CD4-positive, alpha-beta T cell (primary cell): ENCODE measurements at regions of chr6 and their contacts with region 1.

Region 1: DNA sequence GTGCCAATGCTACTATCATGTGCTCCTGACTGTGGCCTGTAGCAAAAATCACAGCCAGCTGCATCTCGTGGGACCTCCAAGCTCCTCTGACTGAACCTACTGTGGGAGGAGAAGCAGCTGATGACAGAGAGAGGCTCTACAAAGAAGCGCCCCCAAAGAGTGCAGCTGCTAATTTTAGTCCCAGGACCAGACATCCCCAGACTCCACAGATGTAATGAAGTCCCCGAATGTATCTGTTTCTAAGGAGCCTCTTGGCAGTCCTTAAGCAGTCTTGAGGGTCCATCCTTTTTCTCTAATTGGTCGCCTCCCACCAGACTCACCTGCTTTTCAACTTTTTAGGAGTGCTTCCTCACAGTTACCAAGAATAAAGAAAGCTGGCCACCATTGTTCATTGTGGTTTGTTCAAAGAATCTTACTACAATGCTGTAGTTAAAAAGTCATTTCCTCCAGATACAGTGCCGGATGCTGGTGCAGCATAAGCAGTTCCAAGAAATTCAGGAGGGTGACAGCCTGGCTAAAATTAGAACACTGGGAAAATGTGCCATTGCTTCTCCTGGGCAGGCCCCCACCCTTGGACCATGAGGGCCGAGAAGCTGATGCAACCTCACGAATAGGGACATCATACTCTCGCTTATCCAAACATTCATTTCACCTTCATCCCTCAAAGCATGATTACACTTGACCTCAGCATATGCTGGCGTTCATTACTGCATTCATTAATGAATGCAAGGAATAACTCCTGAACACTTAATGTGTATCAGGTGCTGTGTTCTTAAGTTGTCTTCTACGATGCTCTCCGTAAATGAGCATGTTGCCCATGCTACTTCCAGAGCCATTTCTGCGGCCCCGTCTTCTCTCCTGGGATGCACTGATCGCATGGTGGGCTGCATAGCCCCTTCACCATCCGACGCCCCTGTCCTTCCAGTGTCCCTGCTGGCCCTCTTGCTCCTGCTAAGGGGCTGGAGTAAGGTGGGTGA is 66.4 kb downstream of the LY86 start:
- DNase-seq: peak in 4 of 14 experiments; percentile 13 to 54 (median 34)
- ATAC-seq: peak; percentile 36
- H3K4me3 ChIP-seq: no peak overlapping the region
- H3K4me3 Mint-ChIP-seq: peak overlapping the region; percentile 75
- H3K27ac ChIP-seq: no peak overlapping the region
- H3K27ac Mint-ChIP-seq: peak overlapping the region; percentile 89
- H3K4me1 ChIP-seq: peaks cover 37% of the 10 kb centered on the region
- H3K4me1 Mint-ChIP-seq: peaks cover 88% of the 10 kb centered on the region
- H3K27me3 ChIP-seq: no peaks in the 10 kb centered on the region
- H3K27me3 Mint-ChIP-seq: no peaks in the 10 kb centered on the region
- CTCF ChIP-seq: no peak

Region 2: GRCh38 chr6:6616656-6617055 is 38.2 kb before region 1 on chr6:
- CTCF ChIA-PET with region 1: interaction called, 3 read pairs
- POLR2A ChIA-PET with region 1: interaction called, 73 read pairs
- intact Hi-C with region 1: loop called (anchors 1 to 5 kb)
- DNase-seq: peak in 3 of 14 experiments; percentile 29 to 36 (median 35)
- ATAC-seq: peak; percentile 10
- H3K4me3 ChIP-seq: no peak overlapping the region
- H3K4me3 Mint-ChIP-seq: peak overlapping the region; percentile 70
- H3K27ac ChIP-seq: no peak overlapping the region
- H3K27ac Mint-ChIP-seq: peak overlapping the region; percentile 96
- H3K4me1 ChIP-seq: peaks cover 44% of the 10 kb centered on the region
- H3K4me1 Mint-ChIP-seq: peaks cover 80% of the 10 kb centered on the region
- H3K27me3 ChIP-seq: no peaks in the 10 kb centered on the region
- H3K27me3 Mint-ChIP-seq: no peaks in the 10 kb centered on the region
- CTCF ChIP-seq: no peak